Caco-2 (cell line): ENCODE measurements at regions of chr1 and their contacts with region 1.

Region 1: GRCh38 chr1:40612345-40612831 is 53.1 kb downstream of the RIMS3 start:
- DNase-seq: peak; percentile 44 to 60
- H3K4me3 ChIP-seq: no peak overlapping the region
- H3K4me3 Mint-ChIP-seq: no peak overlapping the region
- H3K27ac Mint-ChIP-seq: no peak overlapping the region
- H3K4me1 ChIP-seq: no peaks in the 10 kb centered on the region
- H3K4me1 Mint-ChIP-seq: no peaks in the 10 kb centered on the region
- H3K27me3 ChIP-seq: no peaks in the 10 kb centered on the region
- H3K27me3 Mint-ChIP-seq: peaks cover 1% of the 10 kb centered on the region
- CTCF ChIP-seq: peak; percentile 33 to 57

Region 2: GRCh38 chr1:40592107-40592803 is 20.1 kb before region 1 on chr1:
- CTCF ChIA-PET with region 1: no interaction called
- POLR2A ChIA-PET with region 1: no interaction called
- intact Hi-C with region 1: loop called (anchors 1 kb)
- DNase-seq: peak in 1 of 2 experiments; percentile 35
- H3K4me3 ChIP-seq: no peak overlapping the region
- H3K4me3 Mint-ChIP-seq: no peak overlapping the region
- H3K27ac Mint-ChIP-seq: no peak overlapping the region
- H3K4me1 ChIP-seq: no peaks in the 10 kb centered on the region
- H3K4me1 Mint-ChIP-seq: no peaks in the 10 kb centered on the region
- H3K27me3 ChIP-seq: no peaks in the 10 kb centered on the region
- H3K27me3 Mint-ChIP-seq: peaks cover 5% of the 10 kb centered on the region
- CTCF ChIP-seq: peak; percentile 13 to 44

Region 3: GRCh38 chr1:40668769-40669525 is 56.6 kb after region 1 on chr1:
- CTCF ChIA-PET with region 1: no interaction called
- POLR2A ChIA-PET with region 1: no interaction called
- intact Hi-C with region 1: loop called (anchors 5 kb)
- DNase-seq: peak; percentile 55 to 70
- H3K4me3 ChIP-seq: no peak overlapping the region
- H3K4me3 Mint-ChIP-seq: no peak overlapping the region
- H3K27ac Mint-ChIP-seq: no peak overlapping the region
- H3K4me1 ChIP-seq: no peaks in the 10 kb centered on the region
- H3K4me1 Mint-ChIP-seq: no peaks in the 10 kb centered on the region
- H3K27me3 ChIP-seq: no peaks in the 10 kb centered on the region
- H3K27me3 Mint-ChIP-seq: peaks cover 4% of the 10 kb centered on the region
- CTCF ChIP-seq: peak; percentile 65 to 77

Region 4: GRCh38 chr1:40849801-40850592 is 237.6 kb after region 1 on chr1:
- CTCF ChIA-PET with region 1: no interaction called
- POLR2A ChIA-PET with region 1: no interaction called
- intact Hi-C with region 1: loop called (anchors 1 kb)
- DNase-seq: peak; percentile 57 to 68
- H3K4me3 ChIP-seq: no peak overlapping the region
- H3K4me3 Mint-ChIP-seq: no peak overlapping the region
- H3K27ac Mint-ChIP-seq: peak overlapping the region; percentile 32
- H3K4me1 ChIP-seq: no peaks in the 10 kb centered on the region
- H3K4me1 Mint-ChIP-seq: peaks cover 15% of the 10 kb centered on the region
- H3K27me3 ChIP-seq: no peaks in the 10 kb centered on the region
- H3K27me3 Mint-ChIP-seq: no peaks in the 10 kb centered on the region
- CTCF ChIP-seq: peak; percentile 58 to 59